Gastrocnemius medialis (tissue), 4 donors: ENCODE measurements at regions of chr17 and their contacts with region 1.

Region 1: DNA sequence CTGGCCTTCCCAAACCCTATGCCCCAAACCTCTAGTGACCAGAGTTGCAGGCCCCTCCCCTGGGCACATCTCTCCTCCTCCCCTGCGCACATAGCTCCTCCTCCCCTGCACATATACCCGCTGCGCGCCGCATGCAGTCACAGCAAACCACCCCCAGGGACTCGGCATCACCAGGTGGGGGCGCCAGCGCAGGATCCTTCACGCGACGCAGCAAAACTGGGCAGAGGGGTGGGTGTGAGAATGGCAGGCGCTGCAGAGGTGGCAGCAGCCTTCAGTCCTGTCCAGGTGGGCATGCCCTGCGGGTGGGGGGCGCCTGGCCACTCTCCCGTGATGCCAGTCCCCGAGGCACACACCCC is 5.6 kb downstream of the CORO6 start:
- DNase-seq: peak in 1 of 2 donors; percentile 65
- ATAC-seq: no peak
- H3K4me3 ChIP-seq: peak overlapping the region; percentile 32 to 94 (median 67)
- H3K27ac ChIP-seq: peak overlapping the region; percentile 98 to 100 (median 99)
- H3K4me1 ChIP-seq: peaks cover 74 to 83% of the 10 kb centered on the region in 2 donors
- H3K27me3 ChIP-seq: no peaks in the 10 kb centered on the region
- CTCF ChIP-seq: peak; percentile 16 to 55 (median 50)
- POLR2A ChIP-seq: no peak

Region 2: GRCh38 chr17:29589524-29590410 is 27.3 kb before region 1 on chr17 and contains the start of gene GIT1:
- in situ Hi-C with region 1: no loop called
- intact Hi-C with region 1: loop called (anchors 2 kb)
- DNase-seq: peak; percentile 75 to 85
- ATAC-seq: peak; percentile 61 to 62
- H3K4me3 ChIP-seq: peak within 1 kb of the TSS; percentile 67 to 89 (median 79)
- H3K27ac ChIP-seq: peak within 1 kb of the TSS; percentile 85 to 98 (median 93)
- H3K4me1 ChIP-seq: peaks cover 65 to 71% of the 10 kb centered on the region in 2 donors
- H3K27me3 ChIP-seq: no peaks in the 10 kb centered on the region
- CTCF ChIP-seq: no peak
- POLR2A ChIP-seq: peak; percentile 90 to 91
- total RNA-seq, gene GIT1: 30.2 to 62.2 (median 41.1) TPM

Region 3: DNA sequence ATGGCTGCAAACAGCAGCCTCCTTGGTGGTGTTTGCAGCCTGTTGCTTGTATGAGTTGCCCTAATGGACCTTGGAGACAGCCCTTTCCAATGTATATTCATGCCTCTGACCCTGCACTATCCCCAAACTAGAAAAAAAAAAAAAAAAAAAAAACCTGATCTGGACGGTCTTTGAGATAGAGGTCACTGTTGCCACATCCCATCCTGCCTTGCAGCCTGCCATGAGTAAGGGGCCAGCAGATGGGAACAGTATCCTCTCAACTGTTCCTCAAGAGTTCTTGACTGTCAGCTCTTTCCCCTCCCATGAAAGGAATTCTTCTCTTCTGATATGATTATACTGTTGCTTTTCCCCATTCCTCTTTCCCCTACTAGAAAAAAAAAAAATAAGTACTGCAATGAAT is 160.6 kb after region 1 on chr17:
- in situ Hi-C with region 1: loop called in 1 of 4 experiments (anchors 10 kb)
- intact Hi-C with region 1: loop called (anchors 1 kb)
- DNase-seq: no peak
- ATAC-seq: no peak
- H3K4me3 ChIP-seq: no peak overlapping the region
- H3K27ac ChIP-seq: peak overlapping the region in 1 of 4 donors; percentile 84
- H3K4me1 ChIP-seq: peaks cover 9 to 13% of the 10 kb centered on the region in 2 donors
- H3K27me3 ChIP-seq: no peaks in the 10 kb centered on the region
- CTCF ChIP-seq: no peak
- POLR2A ChIP-seq: no peak

Region 4: DNA sequence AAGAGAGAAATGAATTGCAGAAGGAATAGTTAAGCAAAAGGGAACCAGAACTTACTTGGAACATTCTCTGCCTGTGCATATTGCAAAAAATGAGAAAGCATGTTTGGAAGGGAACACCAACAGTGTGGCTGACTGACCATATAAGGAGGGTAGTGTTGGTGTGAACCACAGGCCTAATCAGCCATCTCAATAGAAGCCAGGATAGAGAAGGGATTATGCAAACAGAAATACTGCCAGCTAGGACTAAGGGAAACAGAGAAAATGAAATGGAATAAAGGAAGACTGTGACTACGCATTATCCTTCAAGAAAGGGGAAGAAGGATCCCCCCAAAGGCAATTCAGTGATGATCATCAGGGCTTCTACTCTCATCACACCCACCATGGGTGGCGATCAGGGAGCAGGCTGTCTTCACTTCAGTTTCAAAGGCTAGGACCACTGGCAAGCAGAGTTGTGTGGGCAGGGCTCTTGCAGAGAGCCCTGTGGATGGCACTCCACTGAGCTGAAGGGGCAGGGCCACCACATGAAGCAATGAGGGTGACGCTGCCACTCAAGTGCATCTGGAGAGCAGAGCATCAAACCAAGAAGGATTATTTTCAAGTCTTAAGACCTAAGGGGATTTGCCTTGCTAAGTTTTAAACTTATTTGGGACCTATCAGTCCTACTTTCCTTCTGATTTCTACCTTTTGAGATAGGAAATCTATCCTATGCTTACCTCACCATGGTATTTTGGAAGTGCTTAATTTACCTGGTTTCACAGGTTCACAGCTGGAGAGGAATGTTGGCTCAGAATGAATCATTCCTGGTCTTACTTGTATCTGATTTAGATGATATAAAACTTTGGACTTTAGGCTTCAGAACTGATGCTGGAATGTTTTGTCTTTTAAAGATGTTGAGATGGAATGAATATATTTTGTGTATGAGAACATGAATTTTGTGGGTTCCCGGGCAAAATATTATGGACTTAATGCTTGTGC is 172.4 kb after region 1 on chr17:
- in situ Hi-C with region 1: no loop called
- intact Hi-C with region 1: no loop called
- DNase-seq: no peak
- ATAC-seq: peak in 1 of 2 donors; percentile 34
- H3K4me3 ChIP-seq: no peak overlapping the region
- H3K27ac ChIP-seq: no peak overlapping the region
- H3K4me1 ChIP-seq: peaks cover 0 to 13% of the 10 kb centered on the region in 2 donors
- H3K27me3 ChIP-seq: no peaks in the 10 kb centered on the region
- CTCF ChIP-seq: no peak
- POLR2A ChIP-seq: no peak

Region 5: DNA sequence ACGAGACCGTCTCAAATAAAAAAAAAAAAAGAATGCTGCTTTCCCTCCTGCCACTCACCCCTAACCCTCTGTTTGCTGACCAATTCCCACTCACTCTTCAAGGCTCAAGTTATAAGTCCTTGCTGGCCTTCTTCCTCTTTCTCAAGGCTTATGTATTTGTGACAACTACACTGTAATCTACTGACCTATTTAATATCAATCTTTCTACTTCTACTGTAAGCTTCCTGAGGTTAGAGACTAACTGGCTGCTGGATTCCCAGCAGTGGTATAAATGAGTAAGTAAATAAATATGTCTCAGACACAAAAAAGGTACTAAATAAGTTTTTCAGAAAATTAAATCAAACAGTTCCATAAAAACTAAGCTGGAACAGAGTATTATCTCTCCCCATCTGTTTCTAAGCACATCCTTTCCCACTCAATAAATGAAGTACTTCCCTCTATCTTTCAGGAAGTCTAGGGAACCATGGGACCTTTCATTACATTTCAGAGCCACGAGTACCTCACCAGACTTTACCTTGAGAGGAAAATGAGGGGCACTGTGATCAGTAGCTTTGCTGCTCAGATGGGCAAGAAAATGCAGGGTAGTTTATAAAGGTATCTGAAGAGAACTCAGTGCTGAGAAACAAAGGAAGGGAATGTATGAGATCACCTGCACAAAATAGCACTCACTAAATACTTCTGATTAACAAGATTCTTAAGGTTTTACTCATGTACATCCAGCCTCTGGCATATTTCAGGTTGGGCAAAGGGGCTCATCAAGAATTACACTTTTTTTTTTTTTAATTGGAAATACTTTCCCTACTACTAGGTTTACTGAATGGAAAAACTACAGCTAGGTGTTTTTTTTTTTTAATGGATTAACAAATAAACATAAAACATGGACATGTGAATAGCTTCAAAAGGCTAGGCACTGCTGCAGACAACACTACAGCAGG is 302.1 kb after region 1 on chr17:
- in situ Hi-C with region 1: loop called in 1 of 4 experiments (anchors 25 kb)
- intact Hi-C with region 1: no loop called
- DNase-seq: no peak
- ATAC-seq: no peak
- H3K4me3 ChIP-seq: no peak overlapping the region
- H3K27ac ChIP-seq: no peak overlapping the region
- H3K4me1 ChIP-seq: peaks cover 11 to 20% of the 10 kb centered on the region in 2 donors
- H3K27me3 ChIP-seq: no peaks in the 10 kb centered on the region
- CTCF ChIP-seq: no peak
- POLR2A ChIP-seq: no peak